Mammary epithelial cell (primary cell): ENCODE measurements at regions of chr2 and their contacts with region 1.

Region 1: GRCh38 chr2:238263204-238264071 is 23.6 kb upstream of the HES6 start:
- DNase-seq: peak; percentile 67
- H3K4me3 ChIP-seq: no peak overlapping the region
- H3K27ac ChIP-seq: no peak overlapping the region
- H3K4me1 ChIP-seq: peaks cover 22% of the 10 kb centered on the region
- H3K27me3 ChIP-seq: no peaks in the 10 kb centered on the region
- CTCF ChIP-seq: peak; percentile 78 to 79

Region 2: DNA sequence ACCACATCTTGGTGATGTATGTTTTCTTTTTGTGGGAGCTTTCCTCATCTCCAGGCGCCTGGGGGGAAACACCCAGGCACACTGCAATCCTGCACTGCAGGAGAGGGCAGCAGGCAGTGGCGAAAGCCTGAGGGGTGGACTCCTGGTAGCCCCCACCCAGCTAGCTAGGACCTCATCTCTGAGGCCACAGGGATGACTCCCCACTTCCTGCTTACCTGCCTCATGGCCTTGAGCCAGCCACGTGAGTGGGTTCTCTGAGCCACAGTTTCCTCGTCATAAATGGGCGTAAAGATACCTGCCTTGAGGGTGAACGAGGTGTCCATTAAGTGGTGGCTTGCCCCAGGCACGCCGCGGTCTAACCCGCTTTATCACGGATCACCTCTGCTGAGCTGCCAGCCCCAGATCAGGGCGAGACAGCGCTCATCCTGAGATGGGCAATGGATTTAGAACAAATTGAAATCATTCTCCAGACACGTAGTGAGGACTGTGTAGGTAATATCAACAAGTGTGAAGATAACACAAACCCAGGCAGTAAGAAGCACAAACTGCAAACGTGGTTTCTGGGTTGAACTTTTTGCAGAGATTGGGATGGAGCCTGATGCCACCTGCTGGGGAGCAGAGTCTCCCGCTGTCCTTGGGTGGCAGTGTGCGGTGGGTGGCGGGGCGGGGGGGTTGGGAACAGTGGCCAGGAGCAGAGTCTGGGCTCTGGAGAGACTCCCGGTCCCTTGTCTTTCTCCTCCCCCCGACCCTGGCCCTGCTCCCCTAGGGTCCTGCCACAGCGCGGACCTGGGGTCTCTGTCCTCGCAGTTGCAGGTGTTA is 76.2 kb after region 1 on chr2:
- CTCF ChIA-PET with region 1: no interaction called
- dilution Hi-C with region 1: no loop called
- in situ Hi-C with region 1: loop called in 1 of 2 experiments (anchors 10 kb)
- intact Hi-C with region 1: no loop called
- DNase-seq: peak; percentile 53
- H3K4me3 ChIP-seq: no peak overlapping the region
- H3K27ac ChIP-seq: no peak overlapping the region
- H3K4me1 ChIP-seq: peaks cover 8% of the 10 kb centered on the region
- H3K27me3 ChIP-seq: no peaks in the 10 kb centered on the region
- CTCF ChIP-seq: peak; percentile 3 to 42